Activated CD4-positive, alpha-beta T cell treated with anti-CD3 and anti-CD28 coated beads for 36 hours (primary cell): ENCODE measurements at regions of chr2 and their contacts with region 1.

Region 1: DNA sequence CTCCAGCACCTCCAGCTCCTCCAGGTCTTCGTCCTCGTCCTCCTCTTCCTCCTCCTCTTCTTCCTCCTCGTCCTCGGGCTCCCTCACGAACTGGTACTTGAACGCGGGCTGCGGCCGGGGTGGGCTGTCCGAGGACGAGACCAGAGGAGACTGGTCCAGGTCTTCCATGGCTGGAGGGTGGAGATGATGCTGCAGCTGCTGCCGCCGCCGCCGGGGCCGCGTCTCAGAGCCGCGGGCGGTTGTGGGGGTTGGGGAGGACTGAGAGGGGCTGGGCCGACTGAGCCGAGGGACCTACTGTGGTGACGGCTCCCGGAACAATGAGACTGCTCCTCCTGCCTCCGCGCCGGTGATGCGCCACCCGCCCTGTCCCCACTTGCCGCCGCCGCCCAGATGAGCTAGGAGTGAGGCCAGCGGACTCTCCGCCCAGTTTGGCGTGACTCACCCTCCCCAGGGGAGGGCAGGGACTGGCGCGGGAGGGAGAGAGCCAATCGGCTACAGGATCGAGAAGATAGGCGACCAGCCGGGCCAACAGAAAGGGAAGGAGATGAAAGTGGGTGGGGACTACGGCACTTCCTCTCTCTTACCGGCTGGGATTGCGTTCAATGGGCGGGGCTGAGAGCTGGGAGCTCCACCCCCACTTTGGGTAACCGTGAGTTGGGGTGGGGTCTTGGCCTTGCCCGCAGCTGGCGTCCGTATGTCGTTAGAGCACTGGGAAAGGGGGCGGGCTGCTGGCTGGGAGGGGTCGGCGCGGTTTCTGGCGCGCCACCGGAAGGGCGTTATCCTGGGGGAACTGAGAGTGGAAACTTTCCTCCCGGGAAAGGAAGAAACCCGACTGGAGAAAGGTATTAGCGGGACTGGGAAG is at the start of gene RTN4:
- DNase-seq: peak; percentile 99
- ATAC-seq: peak; percentile 92
- H3K4me3 Mint-ChIP-seq: peak within 1 kb of the TSS; percentile 99
- H3K27ac Mint-ChIP-seq: peak within 1 kb of the TSS; percentile 100
- H3K4me1 Mint-ChIP-seq: peaks cover 60% of the 10 kb centered on the region
- H3K27me3 Mint-ChIP-seq: no peaks in the 10 kb centered on the region
- total RNA-seq, gene RTN4: 70.3 to 84.8 TPM

Region 2: GRCh38 chr2:54330162-54330925 is 720.0 kb before region 1 on chr2:
- CTCF ChIA-PET with region 1: no interaction called
- POLR2A ChIA-PET with region 1: no interaction called
- intact Hi-C with region 1: no loop called
- DNase-seq: peak; percentile 94
- ATAC-seq: peak; percentile 99
- H3K4me3 Mint-ChIP-seq: peak overlapping the region; percentile 72
- H3K27ac Mint-ChIP-seq: peak overlapping the region; percentile 44
- H3K4me1 Mint-ChIP-seq: peaks cover 15% of the 10 kb centered on the region
- H3K27me3 Mint-ChIP-seq: peaks cover 15% of the 10 kb centered on the region

Region 3: GRCh38 chr2:54570925-54571694 is 479.3 kb before region 1 on chr2:
- CTCF ChIA-PET with region 1: no interaction called
- POLR2A ChIA-PET with region 1: no interaction called
- intact Hi-C with region 1: loop called (anchors 5 to 10 kb)
- DNase-seq: peak; percentile 90
- ATAC-seq: peak; percentile 50
- H3K4me3 Mint-ChIP-seq: peak overlapping the region; percentile 65
- H3K27ac Mint-ChIP-seq: peak overlapping the region; percentile 99
- H3K4me1 Mint-ChIP-seq: peaks cover 90% of the 10 kb centered on the region
- H3K27me3 Mint-ChIP-seq: no peaks in the 10 kb centered on the region

Region 4: DNA sequence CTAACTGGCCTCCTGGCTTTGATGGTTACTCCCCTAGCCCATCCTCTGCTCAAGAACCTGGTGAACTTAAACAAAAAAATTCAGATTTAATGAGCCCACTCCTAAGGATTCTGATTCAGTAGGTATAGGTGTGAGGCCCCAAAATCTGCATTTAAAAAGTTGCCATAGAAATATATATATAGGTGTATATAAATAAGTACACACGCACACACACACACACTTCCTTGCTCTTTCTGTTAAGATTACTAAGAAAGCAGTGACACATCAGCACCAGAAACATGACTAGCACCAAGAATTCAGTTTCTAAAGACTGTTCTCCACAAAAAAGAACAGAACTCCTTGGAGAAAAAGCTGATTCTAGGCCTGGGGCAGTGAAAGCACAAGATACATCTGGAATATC is 309.1 kb before region 1 on chr2:
- CTCF ChIA-PET with region 1: no interaction called
- POLR2A ChIA-PET with region 1: no interaction called
- intact Hi-C with region 1: no loop called
- DNase-seq: no peak
- ATAC-seq: no peak
- H3K4me3 Mint-ChIP-seq: no peak overlapping the region
- H3K27ac Mint-ChIP-seq: no peak overlapping the region
- H3K4me1 Mint-ChIP-seq: no peaks in the 10 kb centered on the region
- H3K27me3 Mint-ChIP-seq: peaks cover 5% of the 10 kb centered on the region

Region 5: DNA sequence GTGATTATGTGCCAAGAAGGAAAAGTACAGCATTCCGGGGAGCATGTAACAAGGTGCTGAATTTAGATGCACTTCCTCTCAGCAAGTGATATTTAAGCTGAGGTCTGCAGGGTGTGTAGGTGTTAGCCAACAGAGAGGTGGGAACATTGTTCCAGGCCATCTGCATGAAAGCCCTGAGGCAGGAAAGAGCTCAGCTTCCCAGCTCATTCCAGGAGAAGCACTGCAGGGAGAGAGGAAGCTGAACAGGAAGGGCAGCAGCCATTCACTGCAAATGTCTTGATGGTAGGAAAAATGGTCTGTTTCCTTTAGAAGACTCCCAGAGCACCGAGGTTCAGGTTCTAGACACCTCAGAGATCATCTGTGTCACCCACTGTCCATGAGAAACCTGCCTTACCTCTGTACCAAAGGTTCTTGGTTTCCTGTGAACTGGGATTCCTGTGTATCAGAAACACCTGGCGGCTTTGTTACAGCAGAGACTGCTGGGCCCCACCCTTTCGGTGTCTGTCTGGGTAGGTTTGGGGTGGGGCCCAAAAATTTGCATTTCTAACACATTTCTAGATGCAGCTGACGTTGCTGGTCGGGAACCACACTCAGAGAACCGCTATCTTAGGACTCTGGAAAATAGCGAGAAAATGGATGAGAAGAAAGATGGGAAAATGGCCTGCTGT is 84.1 kb before region 1 on chr2:
- CTCF ChIA-PET with region 1: no interaction called
- POLR2A ChIA-PET with region 1: no interaction called
- intact Hi-C with region 1: no loop called
- DNase-seq: no peak
- ATAC-seq: no peak
- H3K4me3 Mint-ChIP-seq: no peak overlapping the region
- H3K27ac Mint-ChIP-seq: peak overlapping the region; percentile 14
- H3K4me1 Mint-ChIP-seq: peaks cover 27% of the 10 kb centered on the region
- H3K27me3 Mint-ChIP-seq: no peaks in the 10 kb centered on the region

Region 6: GRCh38 chr2:54983345-54984260 is 66.8 kb before region 1 on chr2:
- CTCF ChIA-PET with region 1: no interaction called
- POLR2A ChIA-PET with region 1: no interaction called
- intact Hi-C with region 1: no loop called
- DNase-seq: no peak
- ATAC-seq: no peak
- H3K4me3 Mint-ChIP-seq: no peak overlapping the region
- H3K27ac Mint-ChIP-seq: no peak overlapping the region
- H3K4me1 Mint-ChIP-seq: peaks cover 41% of the 10 kb centered on the region
- H3K27me3 Mint-ChIP-seq: no peaks in the 10 kb centered on the region

Region 7: GRCh38 chr2:55014962-55015939 is 35.1 kb before region 1 on chr2:
- CTCF ChIA-PET with region 1: interaction called, 13 read pairs
- POLR2A ChIA-PET with region 1: no interaction called
- intact Hi-C with region 1: no loop called
- DNase-seq: peak; percentile 54
- ATAC-seq: peak; percentile 60
- H3K4me3 Mint-ChIP-seq: no peak overlapping the region
- H3K27ac Mint-ChIP-seq: no peak overlapping the region
- H3K4me1 Mint-ChIP-seq: peaks cover 34% of the 10 kb centered on the region
- H3K27me3 Mint-ChIP-seq: no peaks in the 10 kb centered on the region

Region 8: DNA sequence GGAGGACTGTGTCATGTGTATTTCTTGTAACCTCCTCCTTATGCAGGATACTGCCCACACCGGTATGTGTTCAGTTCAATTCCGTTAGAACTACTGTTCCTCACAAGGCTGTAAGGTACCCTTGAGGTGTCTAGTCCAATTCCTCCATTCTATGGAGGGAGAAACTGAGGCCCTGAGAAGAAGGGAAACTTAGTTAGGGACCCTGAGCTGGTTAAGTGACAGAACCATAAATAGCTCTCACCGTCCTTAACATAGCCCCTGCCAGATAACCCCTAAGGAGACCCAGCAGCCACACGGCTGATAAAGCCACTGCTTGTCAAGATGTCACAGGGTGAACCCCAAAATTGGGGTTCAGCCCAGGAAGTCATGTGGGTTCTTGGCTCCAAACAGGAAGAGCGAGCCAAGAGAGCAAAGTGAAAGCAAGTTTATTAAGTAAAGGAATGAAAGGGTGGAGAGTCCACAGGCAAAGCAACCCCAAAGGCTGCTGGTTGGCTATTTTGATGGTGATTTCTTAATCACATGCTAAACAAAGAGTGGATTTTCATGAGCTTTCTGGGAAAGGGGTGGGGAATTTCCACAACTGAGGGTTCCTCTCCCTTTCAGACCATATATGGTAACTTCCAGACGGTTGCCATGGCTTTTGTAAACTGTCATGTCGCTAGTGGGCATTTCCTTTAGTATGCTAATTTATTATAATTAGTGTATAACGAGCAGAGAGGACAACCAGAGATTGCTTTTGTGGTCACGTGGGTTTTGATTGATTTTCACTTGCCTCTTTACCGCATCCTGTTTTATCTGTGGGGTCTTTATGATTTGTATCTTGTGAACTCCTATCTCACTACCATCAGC is 83.3 kb after region 1 on chr2:
- CTCF ChIA-PET with region 1: interaction called, 7 read pairs
- POLR2A ChIA-PET with region 1: interaction called, 4 read pairs
- intact Hi-C with region 1: loop called (anchors 1 kb)
- DNase-seq: peak; percentile 65
- ATAC-seq: peak; percentile 95
- H3K4me3 Mint-ChIP-seq: peak overlapping the region; percentile 65
- H3K27ac Mint-ChIP-seq: peak overlapping the region; percentile 96
- H3K4me1 Mint-ChIP-seq: peaks cover 17% of the 10 kb centered on the region
- H3K27me3 Mint-ChIP-seq: no peaks in the 10 kb centered on the region

Region 9: GRCh38 chr2:55268907-55269644 is 218.7 kb after region 1 on chr2 and contains the start of gene MTIF2:
- CTCF ChIA-PET with region 1: no interaction called
- POLR2A ChIA-PET with region 1: no interaction called
- intact Hi-C with region 1: loop called in 1 of 2 experiments (anchors 1 kb)
- DNase-seq: peak; percentile 94
- ATAC-seq: peak; percentile 95
- H3K4me3 Mint-ChIP-seq: peak within 1 kb of the TSS; percentile 96
- H3K27ac Mint-ChIP-seq: peak within 1 kb of the TSS; percentile 95
- H3K4me1 Mint-ChIP-seq: peaks cover 10% of the 10 kb centered on the region
- H3K27me3 Mint-ChIP-seq: no peaks in the 10 kb centered on the region
- total RNA-seq, gene MTIF2: 37.3 to 43.2 TPM

Region 10: GRCh38 chr2:55419679-55420438 is 369.5 kb after region 1 on chr2 and contains the start of gene CCDC88A:
- CTCF ChIA-PET with region 1: no interaction called
- POLR2A ChIA-PET with region 1: no interaction called
- intact Hi-C with region 1: loop called in 1 of 2 experiments (anchors 2 kb)
- DNase-seq: peak; percentile 92
- ATAC-seq: peak; percentile 88
- H3K4me3 Mint-ChIP-seq: peak within 1 kb of the TSS; percentile 77
- H3K27ac Mint-ChIP-seq: peak within 1 kb of the TSS; percentile 69
- H3K4me1 Mint-ChIP-seq: peaks cover 34% of the 10 kb centered on the region
- H3K27me3 Mint-ChIP-seq: peaks cover 13% of the 10 kb centered on the region
- total RNA-seq, gene CCDC88A: 10.1 to 11.3 TPM

Region 11: DNA sequence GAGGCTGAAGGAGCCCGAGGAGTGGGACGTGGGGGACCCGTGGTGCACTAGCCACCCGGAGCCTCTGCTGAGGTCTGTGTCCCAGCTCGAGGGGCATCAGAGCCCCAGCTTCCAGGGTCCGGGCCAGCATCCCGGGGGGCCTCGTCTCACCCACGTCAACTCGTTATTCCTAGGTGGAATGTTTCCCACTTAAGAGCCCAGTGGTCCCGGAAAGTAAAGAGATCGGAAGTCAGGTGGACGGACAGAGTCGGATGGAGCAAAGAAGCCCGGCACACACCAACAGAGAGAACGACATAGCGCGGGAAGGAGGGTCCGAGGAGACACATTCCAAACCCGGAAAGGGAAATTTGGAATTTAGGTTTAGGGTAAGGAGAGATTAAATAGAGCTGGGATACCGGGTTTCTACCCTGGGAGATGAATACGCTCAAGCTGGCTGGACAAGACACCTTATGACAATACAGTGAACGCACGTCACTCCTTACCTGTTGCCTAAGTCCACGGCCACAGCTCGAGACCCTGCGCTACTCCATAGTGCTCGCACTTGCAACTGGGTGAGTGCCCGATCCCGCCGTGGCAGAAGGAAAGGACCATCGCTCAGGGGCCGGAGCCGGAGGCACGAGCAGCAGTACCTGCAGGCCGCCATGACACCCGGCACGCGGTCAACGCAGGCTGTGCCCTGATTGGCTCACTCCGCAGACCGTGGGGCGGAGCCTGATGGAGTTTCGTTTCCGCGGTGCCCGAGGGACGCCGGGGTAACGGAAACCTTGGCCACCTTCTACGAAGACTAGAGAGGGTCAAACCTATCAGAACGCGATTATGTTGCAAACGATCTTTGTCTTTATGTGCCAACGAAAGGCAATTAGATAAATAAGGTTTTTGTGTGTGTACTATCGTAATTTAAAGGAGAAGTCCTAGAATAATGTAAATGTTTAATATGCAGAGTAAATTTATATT is 643.1 kb after region 1 on chr2 and contains the start of gene PNPT1:
- CTCF ChIA-PET with region 1: no interaction called
- POLR2A ChIA-PET with region 1: no interaction called
- intact Hi-C with region 1: loop called (anchors 1 to 5 kb)
- DNase-seq: peak; percentile 97
- ATAC-seq: peak; percentile 100
- H3K4me3 Mint-ChIP-seq: peak within 1 kb of the TSS; percentile 98
- H3K27ac Mint-ChIP-seq: peak within 1 kb of the TSS; percentile 96
- H3K4me1 Mint-ChIP-seq: peaks cover 32% of the 10 kb centered on the region
- H3K27me3 Mint-ChIP-seq: no peaks in the 10 kb centered on the region
- total RNA-seq, gene PNPT1: 41.1 to 54.0 TPM